Activated naive CD4-positive, alpha-beta T cell treated with anti-CD3 and anti-CD28 coated beads for 36 hours (primary cell): ENCODE measurements at regions of chr2 and their contacts with region 1.

Region 1: DNA sequence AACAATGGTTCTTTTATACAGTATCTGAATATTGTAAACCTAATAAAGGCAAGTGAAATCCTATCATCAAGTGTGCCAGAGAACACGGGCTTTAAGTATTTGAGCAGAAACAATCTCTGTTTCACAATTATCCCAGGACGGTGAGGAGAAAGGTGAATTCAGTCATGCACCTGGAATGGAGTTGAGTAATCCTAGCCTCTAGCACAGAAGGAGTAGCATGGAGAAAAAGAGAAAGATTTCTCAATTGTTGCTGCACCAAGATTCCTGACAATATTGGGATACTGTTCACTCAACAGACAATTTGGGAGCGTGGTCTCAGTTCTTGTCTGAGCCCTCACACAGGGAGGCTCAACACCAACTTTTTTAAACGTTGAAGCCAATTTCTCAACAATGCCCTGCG is 510.6 kb downstream of the SOX11 start:
- DNase-seq: no peak
- H3K4me3 Mint-ChIP-seq: no peak overlapping the region
- H3K27ac Mint-ChIP-seq: no peak overlapping the region
- H3K4me1 Mint-ChIP-seq: no peaks in the 10 kb centered on the region
- H3K27me3 Mint-ChIP-seq: no peaks in the 10 kb centered on the region

Region 2: DNA sequence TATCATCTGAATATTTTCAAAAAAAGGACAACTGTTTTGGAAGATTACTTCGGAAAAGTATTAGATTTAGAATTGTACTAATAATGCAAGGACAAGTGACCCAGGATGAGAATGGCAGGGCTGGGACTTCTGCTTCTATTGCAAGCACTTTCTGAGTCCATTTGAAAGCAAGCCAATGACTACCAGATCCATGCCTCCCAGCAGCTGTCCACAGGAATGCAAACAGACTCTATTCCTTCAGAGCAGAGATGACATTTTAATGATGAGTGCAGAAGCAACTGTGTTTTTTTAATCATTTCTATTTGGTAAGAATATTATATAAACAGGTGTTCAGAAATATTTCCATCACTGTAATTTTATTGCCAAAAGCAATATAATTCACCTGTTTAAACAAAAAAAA is 53.9 kb before region 1 on chr2:
- CTCF ChIA-PET with region 1: no interaction called
- intact Hi-C with region 1: no loop called
- DNase-seq: no peak
- H3K4me3 Mint-ChIP-seq: no peak overlapping the region
- H3K27ac Mint-ChIP-seq: no peak overlapping the region
- H3K4me1 Mint-ChIP-seq: no peaks in the 10 kb centered on the region
- H3K27me3 Mint-ChIP-seq: no peaks in the 10 kb centered on the region

Region 3: GRCh38 chr2:6218926-6219325 is 16.2 kb after region 1 on chr2:
- CTCF ChIA-PET with region 1: no interaction called
- intact Hi-C with region 1: loop called (anchors 1 kb)
- DNase-seq: no peak
- H3K4me3 Mint-ChIP-seq: no peak overlapping the region
- H3K27ac Mint-ChIP-seq: no peak overlapping the region
- H3K4me1 Mint-ChIP-seq: no peaks in the 10 kb centered on the region
- H3K27me3 Mint-ChIP-seq: no peaks in the 10 kb centered on the region

Region 4: GRCh38 chr2:7672027-7672684 is 1469.4 kb after region 1 on chr2:
- CTCF ChIA-PET with region 1: no interaction called
- intact Hi-C with region 1: no loop called
- DNase-seq: peak; percentile 80
- H3K4me3 Mint-ChIP-seq: peak overlapping the region; percentile 20
- H3K27ac Mint-ChIP-seq: peak overlapping the region; percentile 74
- H3K4me1 Mint-ChIP-seq: peaks cover 29% of the 10 kb centered on the region
- H3K27me3 Mint-ChIP-seq: no peaks in the 10 kb centered on the region